RWPE1 (cell line): ENCODE measurements at regions of chr15 and their contacts with region 1.

Region 1: DNA sequence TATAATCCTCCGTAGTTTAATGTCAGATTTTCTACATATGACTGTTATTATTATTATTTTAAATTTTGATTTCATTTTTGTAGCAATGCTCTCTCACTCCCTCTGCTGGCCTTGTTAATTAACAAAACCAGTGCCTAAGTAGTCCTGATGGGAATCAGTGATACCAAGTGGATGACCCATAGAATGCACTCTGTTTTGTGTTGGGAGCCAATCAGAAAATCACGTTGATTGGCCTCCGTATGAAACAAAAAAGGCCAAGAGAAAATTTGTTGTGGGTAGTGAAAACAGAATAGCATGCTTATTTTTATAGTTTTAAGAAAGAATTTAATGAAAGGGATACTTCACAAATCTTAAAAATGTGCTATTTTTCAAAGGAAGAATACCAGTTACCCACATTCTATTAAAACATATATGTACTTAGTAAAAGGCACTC is 34.4 kb upstream of the MEIS2 start:
- DNase-seq: peak; percentile 50
- H3K27ac ChIP-seq: no peak overlapping the region
- CTCF ChIP-seq: peak; percentile 77

Region 2: DNA sequence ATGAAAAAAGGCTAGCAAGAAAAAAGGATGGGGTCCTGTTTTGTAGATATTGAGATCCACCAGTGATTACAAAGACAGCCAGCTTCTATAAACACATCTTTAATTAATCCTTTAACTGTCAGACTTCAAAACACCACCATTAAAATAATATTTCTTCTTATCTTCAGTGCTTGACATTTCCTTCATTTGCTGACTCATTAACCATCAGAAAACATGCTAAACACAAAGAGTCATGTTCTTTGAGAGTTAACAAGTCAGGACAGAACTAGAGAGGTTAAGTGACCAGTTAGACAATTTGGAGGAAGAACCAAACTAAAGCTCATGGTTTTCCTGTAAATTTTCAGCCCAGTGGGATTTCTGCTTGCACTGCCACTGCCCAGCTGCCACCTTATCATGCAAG is 145.8 kb before region 1 on chr15:
- CTCF ChIA-PET with region 1: interaction called, 10 read pairs
- POLR2A ChIA-PET with region 1: no interaction called
- DNase-seq: no peak
- H3K27ac ChIP-seq: no peak overlapping the region
- CTCF ChIP-seq: no peak

Region 3: DNA sequence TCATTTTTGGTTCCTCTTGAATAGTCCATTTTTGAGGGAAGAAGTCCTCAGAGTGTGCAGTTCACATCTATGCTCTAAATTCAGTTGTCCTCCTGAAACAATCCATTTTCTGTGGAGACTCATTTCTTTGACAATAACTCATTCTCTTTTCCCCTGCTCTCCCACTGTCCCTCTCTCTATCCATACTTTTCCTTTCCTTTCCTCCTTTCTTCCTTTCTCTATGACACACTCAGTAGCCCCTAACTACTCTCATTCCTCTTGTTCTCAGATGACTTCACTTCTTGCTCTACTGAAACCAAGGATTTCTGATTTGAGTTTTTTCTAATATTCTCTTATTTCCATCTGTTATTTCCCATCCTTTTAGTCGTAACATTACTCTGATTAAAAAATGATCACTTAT is 17.7 kb before region 1 on chr15:
- CTCF ChIA-PET with region 1: no interaction called
- POLR2A ChIA-PET with region 1: no interaction called
- DNase-seq: no peak
- H3K27ac ChIP-seq: no peak overlapping the region
- CTCF ChIP-seq: no peak

Region 4: DNA sequence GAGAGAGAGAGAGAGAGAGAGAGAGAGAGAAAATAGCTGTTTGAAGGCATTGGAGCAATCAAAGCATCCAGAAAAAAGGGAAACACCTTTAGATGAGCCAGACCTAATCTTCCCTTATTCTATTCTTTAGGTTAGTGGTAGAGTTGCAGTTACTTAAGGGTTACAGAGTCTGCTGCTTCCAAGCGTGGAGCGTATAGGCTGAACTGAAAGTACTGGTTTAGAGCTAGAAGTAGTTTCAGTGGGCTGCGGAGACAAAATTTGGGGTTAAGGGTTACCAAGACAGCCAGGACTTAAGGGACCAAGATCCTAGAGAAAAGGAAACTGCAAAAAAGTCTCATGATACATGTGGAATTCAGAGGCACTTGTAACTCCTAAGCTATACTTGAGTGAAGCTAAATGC is 31.7 kb after region 1 on chr15:
- CTCF ChIA-PET with region 1: no interaction called
- POLR2A ChIA-PET with region 1: no interaction called
- DNase-seq: no peak
- H3K27ac ChIP-seq: no peak overlapping the region
- CTCF ChIP-seq: no peak